Caco-2 (cell line): ENCODE measurements at regions of chr7 and their contacts with region 1.

Region 1: GRCh38 chr7:30880090-30880720 is 31.4 kb upstream of the AQP1 start:
- DNase-seq: peak in 1 of 2 experiments; percentile 32
- H3K4me3 ChIP-seq: no peak overlapping the region
- H3K4me3 Mint-ChIP-seq: peak overlapping the region; percentile 40
- H3K27ac Mint-ChIP-seq: peak overlapping the region; percentile 85
- H3K4me1 ChIP-seq: peaks cover 34% of the 10 kb centered on the region
- H3K4me1 Mint-ChIP-seq: peaks cover 31% of the 10 kb centered on the region
- H3K27me3 ChIP-seq: no peaks in the 10 kb centered on the region
- H3K27me3 Mint-ChIP-seq: no peaks in the 10 kb centered on the region
- CTCF ChIP-seq: no peak

Region 2: DNA sequence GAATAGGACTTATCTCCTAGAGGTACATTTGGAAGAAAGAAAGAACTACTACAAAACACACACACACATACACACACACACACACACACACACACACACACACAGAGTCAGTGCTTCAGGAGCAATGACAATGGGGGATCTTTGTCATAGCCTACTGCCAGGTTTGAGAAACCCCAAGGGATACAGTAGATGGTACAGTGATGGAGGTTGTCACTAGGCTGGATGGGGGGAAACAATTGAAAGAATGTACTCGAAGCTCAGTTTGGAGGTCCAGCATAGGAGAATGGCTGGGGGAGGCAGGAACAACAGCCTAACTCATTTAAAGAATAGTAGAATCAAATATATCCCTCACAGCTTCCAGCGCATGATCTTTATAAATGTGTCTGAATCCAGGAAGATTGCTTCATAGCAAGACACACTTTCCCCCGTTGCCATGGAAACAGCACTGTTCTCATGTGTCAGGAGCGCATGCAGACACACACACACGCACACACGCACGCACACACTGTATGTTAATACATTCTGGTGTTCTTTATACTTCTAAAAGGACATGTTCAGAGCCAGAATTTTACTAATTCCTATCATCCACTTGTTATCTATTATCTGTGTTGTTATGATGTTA is 628.4 kb before region 1 on chr7:
- CTCF ChIA-PET with region 1: no interaction called
- POLR2A ChIA-PET with region 1: no interaction called
- intact Hi-C with region 1: no loop called
- DNase-seq: no peak
- H3K4me3 ChIP-seq: no peak overlapping the region
- H3K4me3 Mint-ChIP-seq: no peak overlapping the region
- H3K27ac Mint-ChIP-seq: no peak overlapping the region
- H3K4me1 ChIP-seq: peaks cover 10% of the 10 kb centered on the region
- H3K4me1 Mint-ChIP-seq: peaks cover 14% of the 10 kb centered on the region
- H3K27me3 ChIP-seq: no peaks in the 10 kb centered on the region
- H3K27me3 Mint-ChIP-seq: no peaks in the 10 kb centered on the region
- CTCF ChIP-seq: no peak

Region 3: GRCh38 chr7:30771174-30771879 is 108.9 kb before region 1 on chr7 and contains the start of gene MINDY4:
- CTCF ChIA-PET with region 1: no interaction called
- POLR2A ChIA-PET with region 1: no interaction called
- intact Hi-C with region 1: no loop called
- DNase-seq: peak; percentile 73 to 77
- H3K4me3 ChIP-seq: peak within 1 kb of the TSS; percentile 67
- H3K4me3 Mint-ChIP-seq: peak within 1 kb of the TSS; percentile 78
- H3K27ac Mint-ChIP-seq: peak within 1 kb of the TSS; percentile 49
- H3K4me1 ChIP-seq: peaks cover 6% of the 10 kb centered on the region
- H3K4me1 Mint-ChIP-seq: peaks cover 6% of the 10 kb centered on the region
- H3K27me3 ChIP-seq: no peaks in the 10 kb centered on the region
- H3K27me3 Mint-ChIP-seq: no peaks in the 10 kb centered on the region
- CTCF ChIP-seq: no peak
- total RNA-seq, gene MINDY4: 2.0 and 2.1 TPM in 2 replicates

Region 4: GRCh38 chr7:30896783-30897637 is 16.8 kb after region 1 on chr7:
- CTCF ChIA-PET with region 1: no interaction called
- POLR2A ChIA-PET with region 1: interaction called, 3 read pairs
- intact Hi-C with region 1: loop called (anchors 1 kb)
- DNase-seq: peak; percentile 32 to 71
- H3K4me3 ChIP-seq: no peak overlapping the region
- H3K4me3 Mint-ChIP-seq: peak overlapping the region; percentile 27
- H3K27ac Mint-ChIP-seq: peak overlapping the region; percentile 86
- H3K4me1 ChIP-seq: peaks cover 30% of the 10 kb centered on the region
- H3K4me1 Mint-ChIP-seq: peaks cover 35% of the 10 kb centered on the region
- H3K27me3 ChIP-seq: no peaks in the 10 kb centered on the region
- H3K27me3 Mint-ChIP-seq: no peaks in the 10 kb centered on the region
- CTCF ChIP-seq: no peak